Activated CD4-positive, alpha-beta T cell treated with anti-CD3 and anti-CD28 coated beads, Interleukin-2, amount 10 ng/mL, durations not matched to agents 24 days and 14 days (primary cell): ENCODE measurements at regions of chr13 and their contacts with region 1.

Region 1: DNA sequence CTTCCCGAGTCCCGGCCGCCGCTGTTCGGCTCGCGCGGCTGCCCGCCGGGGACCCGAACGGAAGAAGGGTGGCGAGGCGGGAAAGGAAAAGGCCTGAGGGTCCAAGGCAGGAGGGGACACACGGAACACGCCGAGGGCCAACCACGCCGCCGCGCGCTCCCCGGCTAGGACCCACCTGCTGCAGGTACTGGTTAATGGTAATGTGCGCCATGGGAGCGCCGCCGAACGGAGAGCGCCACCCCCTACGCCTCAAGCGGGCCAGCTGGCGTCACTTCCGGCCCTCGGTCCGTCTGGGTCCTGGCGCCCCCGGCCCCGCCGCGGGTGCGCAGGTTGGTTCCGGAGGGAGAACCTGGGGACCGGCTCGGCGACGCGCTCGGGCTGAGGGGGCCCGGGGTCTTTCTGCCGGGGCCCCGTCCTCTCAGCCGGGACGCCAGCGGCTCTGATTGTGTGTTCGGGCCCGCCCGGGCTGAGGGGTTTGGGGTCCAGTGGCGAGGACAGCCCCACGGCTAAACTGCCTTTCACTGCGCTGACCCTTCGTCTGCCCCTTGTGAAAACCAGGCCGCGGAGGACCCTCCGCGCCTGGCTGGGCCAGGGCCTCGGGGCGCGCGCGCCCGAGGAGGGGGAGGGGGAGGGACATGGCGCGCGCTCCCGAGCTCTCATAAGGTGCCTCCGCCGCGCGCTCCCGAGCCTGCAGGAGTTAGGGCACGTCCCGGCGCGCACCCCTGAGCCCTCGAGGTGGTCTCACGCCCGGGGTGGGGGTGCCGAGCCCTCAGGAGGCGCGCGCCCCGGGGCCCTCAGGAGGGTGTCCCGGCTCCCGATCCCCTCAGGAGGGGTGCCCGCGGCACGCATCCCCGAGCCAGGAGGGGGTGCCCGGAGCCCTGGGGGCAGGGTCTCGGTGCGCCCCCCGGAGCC is at the start of gene PCID2:
- DNase-seq: peak; percentile 98
- H3K4me3 Mint-ChIP-seq: peak within 1 kb of the TSS; percentile 87
- H3K27ac Mint-ChIP-seq: peak within 1 kb of the TSS; percentile 85
- H3K4me1 Mint-ChIP-seq: peaks cover 45% of the 10 kb centered on the region
- H3K27me3 Mint-ChIP-seq: no peaks in the 10 kb centered on the region
- total RNA-seq, gene PCID2: 83.6 and 87.1 TPM in 2 replicates

Region 2: DNA sequence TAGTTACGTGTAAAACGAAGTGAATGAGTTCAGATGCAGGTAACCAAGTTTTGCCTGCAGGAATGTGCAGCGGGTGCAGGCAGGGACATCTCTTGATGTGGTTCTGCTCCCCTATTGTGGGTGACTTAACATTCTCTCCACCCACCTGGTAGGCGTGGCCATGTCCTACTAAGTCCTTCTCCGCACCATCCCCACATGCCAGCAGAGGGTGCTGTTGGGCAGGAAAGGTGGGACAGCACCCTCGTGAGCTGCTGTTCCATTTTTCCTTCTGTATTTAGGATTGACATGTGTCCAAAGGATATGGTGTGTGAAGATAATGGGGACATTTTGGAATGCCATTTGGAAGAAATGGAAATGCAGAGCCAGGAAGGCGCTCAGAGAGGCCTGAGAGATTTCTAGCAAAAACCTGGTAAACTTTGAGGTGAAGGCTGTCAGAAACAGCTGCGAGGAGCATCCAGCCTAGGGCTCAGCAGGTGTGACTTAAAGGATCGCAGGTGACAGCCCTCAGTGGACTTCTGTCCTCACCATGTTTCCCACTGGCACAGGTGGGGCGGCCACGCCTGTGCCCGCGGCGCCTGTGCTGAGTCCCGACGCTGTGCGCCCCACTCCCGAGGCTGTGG is 265.9 kb before region 1 on chr13:
- intact Hi-C with region 1: loop called (anchors 10 kb)
- DNase-seq: peak; percentile 98
- H3K4me3 Mint-ChIP-seq: peak overlapping the region; percentile 80
- H3K27ac Mint-ChIP-seq: no peak overlapping the region
- H3K4me1 Mint-ChIP-seq: peaks cover 6% of the 10 kb centered on the region
- H3K27me3 Mint-ChIP-seq: peaks cover 43% of the 10 kb centered on the region

Region 3: DNA sequence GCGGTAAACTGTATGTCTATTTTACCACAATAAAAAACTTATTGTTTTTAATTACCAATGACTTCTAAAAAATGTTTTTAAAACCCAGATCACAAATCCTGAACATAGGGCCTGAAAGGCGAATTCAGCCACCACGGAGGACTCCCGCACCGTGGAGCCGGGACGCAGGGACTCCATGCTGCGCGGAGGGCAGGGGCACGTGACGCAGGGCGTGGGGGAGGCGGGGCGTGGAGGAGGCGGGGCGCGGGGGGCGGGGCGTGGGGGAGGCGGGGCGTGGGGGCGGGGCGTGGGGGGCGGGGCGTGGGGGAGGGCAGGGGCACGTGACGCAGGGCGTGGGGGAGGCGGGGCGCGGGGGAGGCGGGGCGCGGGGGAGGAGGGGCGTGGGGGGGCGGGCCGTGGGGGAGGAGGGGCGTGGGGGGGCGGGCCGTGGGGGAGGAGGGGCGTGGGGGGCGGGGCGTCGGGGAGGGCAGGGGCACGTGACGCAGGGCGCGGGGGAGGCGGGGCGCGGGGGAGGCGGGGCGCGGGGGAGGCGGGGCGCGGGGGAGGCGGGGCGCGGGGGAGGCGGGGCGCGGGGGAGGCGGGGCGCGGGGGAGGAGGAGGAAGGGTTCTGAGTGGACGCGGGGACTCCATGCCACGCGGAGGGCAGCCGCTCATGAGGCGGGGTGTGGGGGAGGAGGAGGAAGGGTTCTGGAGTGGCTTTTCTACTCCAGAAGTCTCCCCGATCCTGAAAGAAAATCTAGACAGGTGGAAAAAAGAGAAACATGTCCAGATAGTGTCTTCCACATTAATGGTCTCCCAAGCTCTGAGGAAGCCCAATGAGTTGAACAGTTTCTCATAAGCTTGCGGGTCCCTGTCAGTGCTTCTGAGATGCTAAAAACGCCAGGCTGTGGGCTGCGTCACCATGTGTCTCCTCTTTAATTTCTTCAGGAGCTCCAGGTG is 54.6 kb before region 1 on chr13:
- intact Hi-C with region 1: loop called (anchors 1 kb)
- DNase-seq: peak; percentile 87
- H3K4me3 Mint-ChIP-seq: peak overlapping the region; percentile 78
- H3K27ac Mint-ChIP-seq: peak overlapping the region; percentile 79
- H3K4me1 Mint-ChIP-seq: peaks cover 15% of the 10 kb centered on the region
- H3K27me3 Mint-ChIP-seq: peaks cover 20% of the 10 kb centered on the region

Region 4: GRCh38 chr13:113238536-113238935 is 29.9 kb after region 1 on chr13:
- intact Hi-C with region 1: no loop called
- DNase-seq: no peak
- H3K4me3 Mint-ChIP-seq: no peak overlapping the region
- H3K27ac Mint-ChIP-seq: no peak overlapping the region
- H3K4me1 Mint-ChIP-seq: no peaks in the 10 kb centered on the region
- H3K27me3 Mint-ChIP-seq: no peaks in the 10 kb centered on the region

Region 5: DNA sequence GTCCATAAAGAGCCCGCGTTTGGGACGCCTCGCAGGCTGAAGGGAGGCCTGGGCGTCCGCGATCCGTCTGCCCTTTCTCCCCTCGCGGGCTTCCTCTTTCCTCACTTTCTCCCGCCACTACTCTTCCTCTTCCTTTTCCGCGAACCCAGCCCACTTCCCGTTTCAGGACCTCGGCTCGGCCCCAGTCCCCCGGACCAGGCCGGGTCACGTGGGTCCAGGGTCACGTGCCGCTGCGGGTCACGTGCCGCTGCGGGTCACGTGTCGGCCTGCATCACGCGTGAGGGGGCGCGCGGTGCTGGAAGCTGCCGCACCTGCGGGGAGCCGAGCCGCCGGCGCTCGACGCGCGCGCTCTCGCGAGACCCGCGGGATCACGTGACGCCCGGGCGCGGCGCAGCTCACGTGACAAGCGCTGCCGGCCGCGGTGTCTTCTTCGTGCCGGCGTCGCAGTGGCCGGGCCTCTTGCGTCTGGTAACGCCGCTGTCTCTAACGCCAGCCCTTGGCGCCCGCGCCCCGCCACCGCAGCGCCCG is 88.2 kb after region 1 on chr13 and contains the start of gene LAMP1:
- intact Hi-C with region 1: loop called (anchors 1 kb)
- DNase-seq: peak; percentile 100
- H3K4me3 Mint-ChIP-seq: peak within 1 kb of the TSS; percentile 97
- H3K27ac Mint-ChIP-seq: peak within 1 kb of the TSS; percentile 98
- H3K4me1 Mint-ChIP-seq: peaks cover 27% of the 10 kb centered on the region
- H3K27me3 Mint-ChIP-seq: peaks cover 32% of the 10 kb centered on the region
- total RNA-seq, gene LAMP1: 55.3 and 57.5 TPM in 2 replicates

Region 6: GRCh38 chr13:113393563-113394338 is 185.1 kb after region 1 on chr13:
- intact Hi-C with region 1: loop called (anchors 2 kb)
- DNase-seq: peak; percentile 96
- H3K4me3 Mint-ChIP-seq: peak overlapping the region; percentile 91
- H3K27ac Mint-ChIP-seq: peak overlapping the region; percentile 68
- H3K4me1 Mint-ChIP-seq: peaks cover 4% of the 10 kb centered on the region
- H3K27me3 Mint-ChIP-seq: no peaks in the 10 kb centered on the region

Region 7: GRCh38 chr13:113490496-113491417 is 282.1 kb after region 1 on chr13 and contains the start of gene DCUN1D2:
- intact Hi-C with region 1: loop called (anchors 5 kb)
- DNase-seq: peak; percentile 96
- H3K4me3 Mint-ChIP-seq: peak within 1 kb of the TSS; percentile 93
- H3K27ac Mint-ChIP-seq: peak within 1 kb of the TSS; percentile 89
- H3K4me1 Mint-ChIP-seq: peaks cover 49% of the 10 kb centered on the region
- H3K27me3 Mint-ChIP-seq: no peaks in the 10 kb centered on the region
- total RNA-seq, gene DCUN1D2: 21.4 and 29.9 TPM in 2 replicates

Region 8: DNA sequence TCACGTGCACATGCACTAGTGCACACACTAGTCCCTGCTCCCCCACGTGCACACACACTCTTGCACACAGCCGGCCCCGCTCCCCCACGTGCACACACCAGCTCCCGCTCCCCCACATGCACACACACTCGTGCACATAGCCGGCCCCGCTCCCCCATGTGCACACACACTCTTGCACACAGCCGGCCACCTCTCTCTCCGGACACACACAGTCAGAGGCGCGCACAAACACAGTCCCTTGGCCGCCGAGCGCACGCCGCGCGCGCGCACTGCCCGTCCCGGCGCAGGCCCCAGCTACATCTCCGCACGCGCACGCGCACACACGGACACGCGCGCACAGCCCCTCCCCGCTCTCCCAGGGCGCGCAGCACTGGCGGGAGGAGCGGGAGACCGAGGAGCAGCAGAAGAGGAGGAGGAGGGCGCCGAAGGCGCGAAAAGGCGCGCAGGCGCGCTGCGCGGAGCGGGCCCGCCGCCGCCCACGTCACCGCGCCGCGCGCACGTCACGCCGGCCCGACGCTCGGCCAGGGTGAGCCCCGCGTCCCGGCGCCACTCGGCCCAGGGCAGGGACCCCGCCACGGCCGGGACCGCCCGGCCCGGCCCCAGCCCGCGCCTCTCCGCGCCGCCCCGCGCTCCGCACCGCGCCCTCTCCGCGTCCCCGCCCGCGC is 375.7 kb after region 1 on chr13 and contains the start of gene TFDP1:
- intact Hi-C with region 1: loop called (anchors 2 kb)
- DNase-seq: peak; percentile 96
- H3K4me3 Mint-ChIP-seq: peak within 1 kb of the TSS; percentile 97
- H3K27ac Mint-ChIP-seq: peak within 1 kb of the TSS; percentile 94
- H3K4me1 Mint-ChIP-seq: peaks cover 30% of the 10 kb centered on the region
- H3K27me3 Mint-ChIP-seq: peaks cover 3% of the 10 kb centered on the region
- total RNA-seq, gene TFDP1: 180 and 184 TPM in 2 replicates

Region 9: GRCh38 chr13:113758651-113759524 is 550.2 kb after region 1 on chr13 and contains the start of gene TMEM255B:
- intact Hi-C with region 1: no loop called
- DNase-seq: peak; percentile 91
- H3K4me3 Mint-ChIP-seq: peak within 1 kb of the TSS; percentile 91
- H3K27ac Mint-ChIP-seq: no peak within 1 kb of the TSS
- H3K4me1 Mint-ChIP-seq: peaks cover 13% of the 10 kb centered on the region
- H3K27me3 Mint-ChIP-seq: peaks cover 44% of the 10 kb centered on the region
- total RNA-seq, gene TMEM255B: 2.0 and 2.4 TPM in 2 replicates